Right lobe of liver (tissue), 6 donors: ENCODE measurements at regions of chr17 and their contacts with region 1.

Region 1: DNA sequence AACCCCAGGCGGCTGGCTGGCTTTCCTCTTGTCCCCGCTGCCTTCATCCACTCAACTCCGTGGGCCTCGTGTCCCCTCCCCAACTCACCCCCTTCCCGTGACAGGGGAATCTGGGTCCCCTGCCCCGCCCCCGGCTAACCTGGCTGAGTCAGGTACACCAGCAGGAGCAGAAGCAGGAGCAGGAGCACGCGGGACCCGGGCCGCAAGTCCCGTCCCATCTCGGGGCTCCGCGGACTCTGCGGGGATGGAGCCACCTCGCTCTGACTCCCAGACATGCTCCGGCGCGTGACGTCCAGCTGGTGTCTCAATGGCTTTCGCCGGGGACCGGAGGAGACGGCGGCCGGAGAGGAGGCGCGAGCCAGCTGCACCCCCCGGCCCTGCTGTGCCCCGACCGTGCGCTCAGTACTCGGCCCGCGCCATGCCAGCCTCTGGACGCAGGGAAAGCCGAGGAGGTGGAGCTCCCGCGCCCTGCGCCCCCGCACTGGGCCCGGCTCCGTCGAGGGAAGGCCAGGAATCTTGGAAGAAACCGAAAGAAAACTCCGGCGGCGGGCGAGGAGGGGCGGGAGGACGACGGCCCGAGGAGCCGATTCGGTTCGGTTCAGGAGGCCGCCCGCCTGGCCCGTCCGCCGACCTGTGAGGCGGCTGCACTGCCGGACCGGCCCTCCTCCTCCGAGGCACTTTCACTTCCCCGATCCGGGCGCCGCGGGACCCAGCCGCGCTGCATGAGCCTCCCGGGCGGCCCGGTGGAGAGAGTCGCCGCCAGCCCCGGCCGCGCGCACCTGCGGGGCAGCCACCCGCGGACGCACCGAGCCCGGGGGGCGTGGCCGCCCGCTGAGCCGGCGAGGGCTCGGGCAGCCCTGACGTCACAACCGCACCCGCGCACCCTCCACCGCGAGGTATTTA is at the starts of genes CXCL16 and ZMYND15:
- DNase-seq: peak; percentile 74 to 79 (median 77)
- ATAC-seq: peak; percentile 63 to 75 (median 70)
- H3K4me3 ChIP-seq: peak within 1 kb of the TSS; percentile 73 to 94 (median 90)
- H3K27ac ChIP-seq: peak within 1 kb of the TSS; percentile 64 to 87 (median 74)
- H3K4me1 ChIP-seq: peaks cover 0 to 4% (median 0%) of the 10 kb centered on the region in 4 donors
- H3K27me3 ChIP-seq: no peaks in the 10 kb centered on the region
- CTCF ChIP-seq: no peak
- POLR2A ChIP-seq: peak; percentile 79
- total RNA-seq, gene CXCL16: 13.3 to 69.6 (median 31.3) TPM
- total RNA-seq, gene ZMYND15: 0.70 to 6.5 (median 1.9) TPM

Region 2: GRCh38 chr17:4658478-4659305 is 80.7 kb before region 1 on chr17:
- intact Hi-C with region 1: no loop called
- DNase-seq: no peak
- ATAC-seq: peak in 1 of 4 donors; percentile 49
- H3K4me3 ChIP-seq: no peak overlapping the region
- H3K27ac ChIP-seq: no peak overlapping the region
- H3K4me1 ChIP-seq: no peaks in the 10 kb centered on the region
- H3K27me3 ChIP-seq: no peaks in the 10 kb centered on the region
- CTCF ChIP-seq: no peak
- POLR2A ChIP-seq: no peak

Region 3: DNA sequence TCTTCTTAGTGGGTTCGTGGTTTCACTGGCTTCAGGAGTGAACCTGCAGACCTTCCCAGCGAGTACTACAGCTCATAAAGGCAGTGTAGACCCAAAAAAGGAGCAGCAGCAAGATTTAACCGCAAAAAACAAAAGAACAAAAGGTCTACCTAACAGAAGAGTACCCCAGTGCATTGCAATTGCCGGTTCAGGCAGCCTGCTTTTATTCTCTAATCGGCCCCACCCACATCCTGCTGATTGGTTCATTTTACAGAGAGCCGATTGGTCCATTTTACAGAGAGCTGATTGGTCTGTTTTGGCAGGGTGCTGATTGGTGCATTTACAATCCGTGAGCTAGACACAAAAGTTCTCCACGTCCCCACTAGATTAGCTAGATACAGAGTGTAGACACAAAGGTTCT is 30.9 kb before region 1 on chr17:
- intact Hi-C with region 1: no loop called
- DNase-seq: no peak
- ATAC-seq: no peak
- H3K4me3 ChIP-seq: no peak overlapping the region
- H3K27ac ChIP-seq: no peak overlapping the region
- H3K4me1 ChIP-seq: peaks cover 0 to 28% (median 15%) of the 10 kb centered on the region in 4 donors
- H3K27me3 ChIP-seq: no peaks in the 10 kb centered on the region
- CTCF ChIP-seq: no peak
- POLR2A ChIP-seq: no peak

Region 4: DNA sequence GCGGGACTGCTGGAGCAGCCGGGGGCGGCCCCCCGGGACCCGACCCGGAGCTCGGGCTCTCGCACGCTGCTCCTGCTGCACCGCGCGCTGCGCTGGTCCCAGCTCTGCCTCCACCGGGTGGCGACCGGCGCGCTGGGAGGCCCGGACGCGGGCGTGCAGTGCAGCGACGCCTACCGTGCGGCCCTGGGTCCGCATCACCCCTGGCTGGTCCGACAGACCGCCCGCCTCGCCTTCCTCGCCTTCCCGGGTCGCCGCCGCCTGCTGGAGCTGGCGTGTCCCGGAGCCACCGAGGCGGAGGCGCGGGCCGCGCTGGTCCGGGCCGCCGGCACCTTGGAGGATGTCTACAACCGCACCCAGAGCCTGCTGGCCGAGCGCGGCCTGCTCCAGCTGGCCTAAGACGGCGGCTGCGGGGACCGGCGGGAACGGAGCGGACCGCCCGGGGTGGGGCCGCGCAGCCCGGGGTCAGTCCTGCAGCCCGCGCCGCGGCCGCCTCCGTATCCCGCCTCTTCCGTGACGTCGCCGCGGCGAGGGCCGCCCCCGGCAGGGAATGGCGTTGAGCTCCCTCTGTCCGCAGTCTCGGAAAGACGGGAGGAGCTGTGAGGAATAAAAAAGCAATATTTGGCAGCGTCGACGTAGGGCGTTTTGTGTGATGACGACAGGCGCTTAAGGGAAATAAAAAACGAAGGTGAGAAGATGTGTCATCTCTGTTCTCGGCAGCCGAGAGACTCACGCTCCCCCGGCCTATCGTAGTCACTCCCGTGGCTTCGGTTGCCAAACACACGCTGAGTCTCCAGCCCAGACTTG is 50.7 kb after region 1 on chr17:
- intact Hi-C with region 1: loop called (anchors 10 kb)
- DNase-seq: peak; percentile 89 to 92 (median 91)
- ATAC-seq: peak; percentile 67 to 86 (median 78)
- H3K4me3 ChIP-seq: peak overlapping the region; percentile 68 to 84 (median 83)
- H3K27ac ChIP-seq: peak overlapping the region; percentile 84 to 96 (median 92)
- H3K4me1 ChIP-seq: peaks cover 0 to 25% (median 5%) of the 10 kb centered on the region in 4 donors
- H3K27me3 ChIP-seq: no peaks in the 10 kb centered on the region
- CTCF ChIP-seq: peak; percentile 64 to 96 (median 79)
- POLR2A ChIP-seq: peak; percentile 96

Region 5: GRCh38 chr17:4872786-4873185 is 133.4 kb after region 1 on chr17:
- intact Hi-C with region 1: no loop called
- DNase-seq: peak in 1 of 3 donors; percentile 46
- ATAC-seq: peak; percentile 67 to 86 (median 83)
- H3K4me3 ChIP-seq: no peak overlapping the region
- H3K27ac ChIP-seq: peak overlapping the region in 1 of 3 donors; percentile 16
- H3K4me1 ChIP-seq: no peaks in the 10 kb centered on the region
- H3K27me3 ChIP-seq: no peaks in the 10 kb centered on the region
- CTCF ChIP-seq: no peak
- POLR2A ChIP-seq: no peak